ENCODE measurements at regions of chr11 and their contacts with region 1.

Region 1: GRCh38 chr11:130069684-130070108 is at the start of gene APLP2:
- DNase-seq: peak; percentile 100
- H3K4me3 ChIP-seq: peak within 1 kb of the TSS; percentile 78 to 96 (median 86)
- H3K27ac ChIP-seq: peak within 1 kb of the TSS; percentile 94 to 99 (median 97)
- H3K4me1 ChIP-seq: peaks cover 0 to 27% (median 17%) of the 10 kb centered on the region in 4 donors
- H3K27me3 ChIP-seq: no peaks in the 10 kb centered on the region
- CTCF ChIP-seq: no peak
- EP300 ChIP-seq: no peak
- POLR2A ChIP-seq: peak; percentile 71 to 83
- total RNA-seq, gene APLP2: 247 to 276 (median 256) TPM

Region 2: GRCh38 chr11:129922674-129923073 is 147.0 kb before region 1 on chr11:
- intact Hi-C with region 1: loop called (anchors 2 kb)
- DNase-seq: no peak
- H3K4me3 ChIP-seq: no peak overlapping the region
- H3K27ac ChIP-seq: no peak overlapping the region
- H3K4me1 ChIP-seq: no peaks in the 10 kb centered on the region
- H3K27me3 ChIP-seq: no peaks in the 10 kb centered on the region
- CTCF ChIP-seq: no peak
- EP300 ChIP-seq: no peak
- POLR2A ChIP-seq: no peak

Region 3: DNA sequence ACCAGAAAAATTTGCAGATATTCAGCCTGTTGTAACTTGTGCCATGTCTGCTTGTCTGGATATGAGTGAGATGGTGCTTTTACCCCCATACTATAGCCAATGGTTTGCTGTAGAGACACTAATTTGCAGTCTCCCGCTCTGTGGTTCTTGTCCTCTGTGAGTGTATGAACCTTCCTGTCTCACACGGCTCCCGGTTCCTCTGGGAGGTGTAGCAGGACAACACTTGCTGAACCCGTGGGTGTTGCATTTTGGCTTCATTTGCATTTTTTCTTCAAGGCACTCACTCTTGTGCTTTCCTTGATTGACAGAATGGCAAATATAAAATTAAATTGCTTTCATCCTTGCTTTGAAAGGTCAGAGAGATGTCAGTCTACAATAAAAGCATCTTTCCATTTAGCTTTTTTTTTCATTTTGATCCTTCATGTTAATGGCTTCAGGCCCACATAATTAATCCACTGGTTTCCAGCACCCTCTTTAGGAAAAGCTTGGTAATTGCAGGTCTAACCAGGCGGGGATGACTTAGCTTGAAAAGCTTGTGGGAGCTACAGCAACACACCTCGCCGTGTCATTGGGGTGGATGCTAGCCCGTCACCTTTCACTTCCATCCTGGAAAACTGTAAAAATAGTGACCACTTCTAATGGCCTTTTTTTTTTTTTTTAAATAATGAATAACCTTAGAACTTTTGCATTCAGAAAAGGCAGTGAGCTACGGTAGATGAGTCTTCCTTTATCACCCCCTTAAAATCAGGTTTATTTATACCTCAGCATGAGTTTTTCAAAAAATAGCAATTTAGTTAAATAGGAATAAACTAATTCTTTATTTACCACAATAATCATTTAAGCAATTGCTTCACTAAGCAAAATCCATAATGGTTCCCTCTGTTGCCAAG is 62.5 kb after region 1 on chr11:
- intact Hi-C with region 1: loop called (anchors 2 kb)
- DNase-seq: no peak
- H3K4me3 ChIP-seq: no peak overlapping the region
- H3K27ac ChIP-seq: no peak overlapping the region
- H3K4me1 ChIP-seq: peaks cover 0 to 9% (median 0%) of the 10 kb centered on the region in 4 donors
- H3K27me3 ChIP-seq: no peaks in the 10 kb centered on the region
- CTCF ChIP-seq: peak; percentile 47 to 83 (median 79)
- EP300 ChIP-seq: no peak
- POLR2A ChIP-seq: no peak

Region 4: DNA sequence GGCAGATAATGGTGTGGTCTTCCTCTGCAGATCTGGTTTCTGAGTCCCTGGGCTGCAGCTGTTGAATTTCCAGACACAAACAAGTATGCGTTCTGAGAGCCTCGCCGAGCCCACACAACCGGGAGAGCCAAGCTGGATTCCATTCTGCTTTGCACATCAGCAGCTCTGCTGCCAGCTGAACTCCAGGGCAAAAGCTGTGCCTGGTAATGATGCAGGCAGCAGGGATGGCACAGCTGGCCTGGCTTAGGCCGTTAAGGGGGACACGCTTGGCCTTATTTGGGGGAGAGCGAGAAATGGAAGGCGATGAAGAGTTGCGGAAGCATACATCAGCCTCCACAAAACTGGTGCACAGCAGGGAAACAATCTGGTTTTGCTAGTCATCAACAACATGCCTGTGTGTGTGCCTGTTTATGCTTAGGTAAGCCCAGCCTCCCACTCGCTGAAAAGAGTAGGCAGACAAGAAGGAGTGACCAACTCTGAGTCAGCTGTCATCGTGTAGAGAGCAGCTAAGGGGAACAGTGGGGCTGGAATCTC is 333.6 kb after region 1 on chr11:
- intact Hi-C with region 1: loop called (anchors 10 kb)
- DNase-seq: peak; percentile 91
- H3K4me3 ChIP-seq: no peak overlapping the region
- H3K27ac ChIP-seq: peak overlapping the region; percentile 74 to 84 (median 82)
- H3K4me1 ChIP-seq: peaks cover 0 to 77% (median 70%) of the 10 kb centered on the region in 4 donors
- H3K27me3 ChIP-seq: no peaks in the 10 kb centered on the region
- CTCF ChIP-seq: no peak
- EP300 ChIP-seq: peak in 2 of 4 donors; percentile 34 to 47
- POLR2A ChIP-seq: no peak